K562 (cell line): ENCODE measurements at regions of chr9 and their contacts with region 1.

Region 1: DNA sequence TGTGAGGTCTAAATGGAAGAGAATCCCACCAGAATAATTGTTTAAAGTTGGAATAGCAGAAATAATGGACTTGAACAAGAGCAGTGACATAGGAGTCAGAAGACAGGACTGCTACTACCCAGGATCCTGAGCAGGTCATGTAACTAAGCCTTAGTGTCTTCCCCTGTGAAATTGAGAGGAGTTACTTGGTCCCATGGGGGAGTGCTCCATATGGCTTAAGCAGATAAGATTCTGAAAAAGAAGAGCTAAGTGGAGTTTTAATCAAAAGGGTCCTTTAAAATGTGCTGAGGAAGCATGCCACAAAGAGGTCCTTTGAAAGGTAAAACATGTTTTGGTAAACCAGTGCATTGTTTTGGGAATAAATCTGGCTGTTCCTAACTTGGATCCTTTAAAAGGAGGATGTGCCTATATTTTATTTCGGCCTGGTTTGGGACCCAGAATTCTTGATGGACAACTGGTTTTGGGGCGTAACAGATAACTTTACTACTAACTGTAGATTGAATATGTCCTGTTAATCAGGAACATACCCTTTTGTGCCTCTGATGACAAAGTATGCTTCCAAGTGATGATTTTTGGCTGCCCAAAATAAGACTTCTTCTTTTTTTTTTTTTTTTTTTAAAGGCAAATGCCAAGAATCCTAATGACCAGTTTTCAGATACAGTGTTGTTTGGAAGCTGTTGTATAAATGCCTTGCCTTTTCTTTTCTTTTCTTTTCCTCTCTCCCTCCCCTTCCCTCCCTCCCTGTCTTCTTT is 5.7 kb downstream of the RCL1 start:
- DNase-seq: peak; percentile 60 to 90 (median 70)
- ATAC-seq: peak; percentile 88
- H3K4me3 ChIP-seq: peak overlapping the region; percentile 7; the same call in 1 of the 2 replicates
- H3K27ac ChIP-seq: peak overlapping the region; percentile 78
- H3K4me1 ChIP-seq: peaks cover 8 to 33% of the 10 kb centered on the region in 2 experiments; a peak in 3 of 5 replicates
- H3K27me3 ChIP-seq: no peaks in the 10 kb centered on the region
- CTCF ChIP-seq: no peak
- EP300 ChIP-seq: peak; percentile 94
- POLR2A ChIP-seq: no peak
- RAD21 ChIP-seq: 0 out of 4 replicates have a peak, but pooled peaks of 1 of the 2 experiments have one; percentile 5

Region 2: GRCh38 chr9:4762108-4762885 is 36.2 kb before region 1 on chr9:
- CTCF ChIA-PET with region 1: no interaction called
- POLR2A ChIA-PET with region 1: interaction called, 3 read pairs
- in situ Hi-C with region 1: no loop called
- intact Hi-C with region 1: loop called (anchors 1 kb)
- DNase-seq: peak; percentile 25 to 86 (median 38)
- ATAC-seq: peak; percentile 75
- H3K4me3 ChIP-seq: peak overlapping the region; percentile 7; the same call in 1 of the 2 replicates
- H3K27ac ChIP-seq: peak overlapping the region; percentile 62
- H3K4me1 ChIP-seq: peaks cover 8 to 12% of the 10 kb centered on the region in 2 experiments; a peak in 4 of 5 replicates
- H3K27me3 ChIP-seq: no peaks in the 10 kb centered on the region
- CTCF ChIP-seq: peak; percentile 71 to 83 (median 76)
- EP300 ChIP-seq: no peak
- POLR2A ChIP-seq: no peak
- RAD21 ChIP-seq: peak; percentile 82 to 92

Region 3: GRCh38 chr9:4814913-4815312 is 16.5 kb after region 1 on chr9:
- CTCF ChIA-PET with region 1: no interaction called
- POLR2A ChIA-PET with region 1: interaction called, 4 read pairs
- in situ Hi-C with region 1: no loop called
- intact Hi-C with region 1: loop called (anchors 2 kb)
- DNase-seq: no peak
- ATAC-seq: no peak
- H3K4me3 ChIP-seq: no peak overlapping the region
- H3K27ac ChIP-seq: no peak overlapping the region; the same call in 2 of the 3 replicates
- H3K4me1 ChIP-seq: peaks cover 9 to 20% of the 10 kb centered on the region in 2 experiments; a peak in 4 of 5 replicates
- H3K27me3 ChIP-seq: no peaks in the 10 kb centered on the region
- CTCF ChIP-seq: no peak
- EP300 ChIP-seq: no peak
- POLR2A ChIP-seq: no peak
- RAD21 ChIP-seq: no peak

Region 4: GRCh38 chr9:4904322-4905134 is 106.1 kb after region 1 on chr9:
- CTCF ChIA-PET with region 1: no interaction called
- POLR2A ChIA-PET with region 1: no interaction called
- in situ Hi-C with region 1: no loop called
- intact Hi-C with region 1: no loop called
- DNase-seq: no peak
- ATAC-seq: no peak
- H3K4me3 ChIP-seq: no peak overlapping the region
- H3K27ac ChIP-seq: no peak overlapping the region
- H3K4me1 ChIP-seq: peaks cover 5 to 11% of the 10 kb centered on the region in 2 experiments; a peak in 4 of 5 replicates
- H3K27me3 ChIP-seq: no peaks in the 10 kb centered on the region
- CTCF ChIP-seq: no peak
- EP300 ChIP-seq: no peak
- POLR2A ChIP-seq: no peak
- RAD21 ChIP-seq: no peak

Region 5: DNA sequence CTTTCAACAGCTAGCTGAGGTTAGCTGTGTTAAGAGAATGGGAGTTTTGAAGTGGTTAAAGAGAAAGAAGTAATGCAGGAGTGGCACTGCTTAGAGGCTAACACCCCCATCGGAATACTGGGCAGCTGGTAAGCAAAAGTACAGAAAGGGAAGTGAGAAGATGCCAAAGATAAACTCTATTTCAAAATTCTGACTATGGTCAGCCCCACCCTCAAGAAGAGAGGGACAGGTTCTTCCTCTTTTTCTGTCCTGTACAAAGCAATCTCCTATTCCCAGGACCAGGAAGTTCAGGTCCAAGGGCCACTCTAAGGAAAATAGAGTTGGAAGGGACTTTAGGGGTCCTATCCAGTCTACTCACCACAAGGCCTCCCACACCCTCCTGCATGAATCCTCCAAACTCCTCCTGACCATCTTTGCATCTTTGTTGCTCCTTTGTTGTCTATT is 140.7 kb after region 1 on chr9:
- CTCF ChIA-PET with region 1: no interaction called
- POLR2A ChIA-PET with region 1: no interaction called
- in situ Hi-C with region 1: no loop called
- intact Hi-C with region 1: no loop called
- DNase-seq: no peak
- ATAC-seq: peak; percentile 60
- H3K4me3 ChIP-seq: no peak overlapping the region
- H3K27ac ChIP-seq: no peak overlapping the region
- H3K4me1 ChIP-seq: peaks cover 3 to 21% of the 10 kb centered on the region in 2 experiments; a peak in 3 of 5 replicates
- H3K27me3 ChIP-seq: no peaks in the 10 kb centered on the region
- CTCF ChIP-seq: no peak
- EP300 ChIP-seq: no peak
- POLR2A ChIP-seq: no peak
- RAD21 ChIP-seq: no peak